H1 (cell line): ENCODE measurements at regions of chr18 and their contacts with region 1.

Region 1: GRCh38 chr18:80157708-80158343 is 48.8 kb downstream of the ADNP2 start:
- DNase-seq: peak in 1 of 2 experiments; percentile 85
- H3K4me3 ChIP-seq: no peak overlapping the region
- H3K27ac ChIP-seq: no peak overlapping the region
- H3K4me1 ChIP-seq: no peaks in the 10 kb centered on the region
- H3K27me3 ChIP-seq: no peaks in the 10 kb centered on the region
- CTCF ChIP-seq: peak; percentile 77 to 93 (median 89)
- EP300 ChIP-seq: no peak
- POLR2A ChIP-seq: no peak
- RAD21 ChIP-seq: peak; percentile 83 to 84

Region 2: GRCh38 chr18:80136679-80137078 is 21.1 kb before region 1 on chr18:
- CTCF ChIA-PET with region 1: interaction called, 39 read pairs
- POLR2A ChIA-PET with region 1: interaction called, 4 read pairs
- DNase-seq: no peak
- H3K4me3 ChIP-seq: no peak overlapping the region
- H3K27ac ChIP-seq: no peak overlapping the region
- H3K4me1 ChIP-seq: 0 out of 7 replicates have a peak, but pooled peaks cover 0 to 5% (median 0%) of the 10 kb centered on the region in 4 experiments
- H3K27me3 ChIP-seq: no peaks in the 10 kb centered on the region
- CTCF ChIP-seq: no peak
- EP300 ChIP-seq: no peak
- POLR2A ChIP-seq: no peak
- RAD21 ChIP-seq: no peak

Region 3: GRCh38 chr18:80147418-80148325 is 10.2 kb before region 1 on chr18:
- CTCF ChIA-PET with region 1: interaction called, 39 read pairs
- POLR2A ChIA-PET with region 1: interaction called, 4 read pairs
- DNase-seq: peak in 1 of 2 experiments; percentile 84
- H3K4me3 ChIP-seq: peak overlapping the region; percentile 37 to 61 (median 48)
- H3K27ac ChIP-seq: no peak overlapping the region
- H3K4me1 ChIP-seq: no peaks in the 10 kb centered on the region; a peak in 2 of 7 replicates
- H3K27me3 ChIP-seq: no peaks in the 10 kb centered on the region
- CTCF ChIP-seq: no peak
- EP300 ChIP-seq: no peak
- POLR2A ChIP-seq: no peak
- RAD21 ChIP-seq: no peak

Region 4: GRCh38 chr18:80171054-80171872 is 13.4 kb after region 1 on chr18:
- CTCF ChIA-PET with region 1: interaction called, 124 read pairs
- POLR2A ChIA-PET with region 1: interaction called, 3 read pairs
- DNase-seq: peak in 1 of 2 experiments; percentile 96
- H3K4me3 ChIP-seq: no peak overlapping the region
- H3K27ac ChIP-seq: no peak overlapping the region
- H3K4me1 ChIP-seq: no peaks in the 10 kb centered on the region
- H3K27me3 ChIP-seq: no peaks in the 10 kb centered on the region
- CTCF ChIP-seq: peak; percentile 85 to 97 (median 93)
- EP300 ChIP-seq: no peak
- POLR2A ChIP-seq: no peak
- RAD21 ChIP-seq: peak; percentile 90

Region 5: GRCh38 chr18:80179857-80180551 is 22.2 kb after region 1 on chr18:
- CTCF ChIA-PET with region 1: interaction called, 124 read pairs
- POLR2A ChIA-PET with region 1: no interaction called
- DNase-seq: no peak
- H3K4me3 ChIP-seq: no peak overlapping the region
- H3K27ac ChIP-seq: no peak overlapping the region
- H3K4me1 ChIP-seq: peaks cover 0 to 10% (median 3%) of the 10 kb centered on the region in 4 experiments; a peak in 5 of 7 replicates
- H3K27me3 ChIP-seq: no peaks in the 10 kb centered on the region
- CTCF ChIP-seq: no peak
- EP300 ChIP-seq: no peak
- POLR2A ChIP-seq: no peak
- RAD21 ChIP-seq: no peak

Region 6: GRCh38 chr18:80247403-80247916 is 89.6 kb after region 1 on chr18 and contains the start of gene PARD6G:
- CTCF ChIA-PET with region 1: interaction called, 30 read pairs
- POLR2A ChIA-PET with region 1: interaction called, 4 read pairs
- DNase-seq: peak in 1 of 2 experiments; percentile 79
- H3K4me3 ChIP-seq: peak within 1 kb of the TSS; percentile 71 to 96 (median 75)
- H3K27ac ChIP-seq: no peak within 1 kb of the TSS
- H3K4me1 ChIP-seq: peaks cover 0 to 5% (median 0%) of the 10 kb centered on the region in 4 experiments; a peak in 1 of 7 replicates
- H3K27me3 ChIP-seq: no peaks in the 10 kb centered on the region; a peak in 2 of 7 replicates
- CTCF ChIP-seq: peak in 1 of 3 experiments; percentile 5; a peak in 1 of 4 replicates
- EP300 ChIP-seq: no peak
- POLR2A ChIP-seq: no peak
- RAD21 ChIP-seq: peak in 1 of 2 experiments; percentile 21; a peak in 1 of 4 replicates
- total RNA-seq, gene PARD6G: 17.9 and 18.8 TPM in 2 replicates

Region 7: GRCh38 chr18:80253871-80254492 is 96.2 kb after region 1 on chr18:
- CTCF ChIA-PET with region 1: interaction called, 30 read pairs
- POLR2A ChIA-PET with region 1: no interaction called
- DNase-seq: peak in 1 of 2 experiments; percentile 72
- H3K4me3 ChIP-seq: no peak overlapping the region
- H3K27ac ChIP-seq: no peak overlapping the region
- H3K4me1 ChIP-seq: no peaks in the 10 kb centered on the region
- H3K27me3 ChIP-seq: no peaks in the 10 kb centered on the region; a peak in 1 of 7 replicates
- CTCF ChIP-seq: no peak
- EP300 ChIP-seq: no peak
- POLR2A ChIP-seq: no peak
- RAD21 ChIP-seq: no peak